Mucosa of descending colon (tissue), 3 donors: ENCODE measurements at regions of chr10 and their contacts with region 1.

Region 1: DNA sequence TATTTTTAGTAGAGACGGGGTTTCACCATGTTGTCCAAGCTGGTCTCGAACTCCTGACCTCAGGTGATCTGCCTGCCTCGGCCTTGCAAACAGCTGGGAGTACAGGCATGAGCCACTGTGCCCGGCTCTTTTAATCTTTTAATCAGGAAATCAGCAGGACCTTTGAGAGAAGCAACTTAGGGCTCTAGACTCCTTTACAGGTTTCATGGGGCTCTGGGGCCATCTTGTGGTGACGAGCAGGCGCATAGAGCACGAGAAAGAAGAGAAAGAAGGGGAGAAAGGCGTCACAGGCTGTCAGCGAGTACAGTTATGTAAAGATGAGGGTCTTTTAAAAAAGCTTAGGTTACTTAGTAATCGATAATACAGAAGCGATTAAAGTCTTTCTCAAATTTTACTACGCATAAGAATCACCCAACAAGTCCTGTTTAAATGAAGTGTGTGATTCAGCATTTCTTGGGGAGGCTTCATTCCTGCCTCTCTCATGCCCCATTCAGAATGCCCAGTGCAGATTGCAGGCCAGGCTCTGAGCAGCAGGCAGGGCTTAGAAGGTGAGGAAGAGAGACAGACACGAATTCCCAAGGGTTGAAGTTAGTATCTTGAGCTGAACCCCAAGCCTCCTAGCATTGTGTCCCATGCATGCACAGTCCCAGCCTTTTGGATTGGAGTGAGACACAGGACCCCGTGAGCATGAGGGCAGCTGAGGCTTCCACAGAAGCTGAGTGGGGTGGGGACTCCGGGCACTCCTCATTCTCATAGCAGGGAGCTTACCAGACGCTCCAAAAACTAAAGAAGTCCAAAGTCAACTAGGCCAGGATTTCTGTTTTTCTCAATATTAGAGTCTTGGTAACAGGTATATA is 23.6 kb upstream of the PFKP start:
- DNase-seq: peak in 2 of 3 donors; percentile 76 to 83
- ATAC-seq: peak; percentile 85
- H3K4me3 ChIP-seq: no peak overlapping the region
- H3K4me1 ChIP-seq: peaks cover 3% of the 10 kb centered on the region
- CTCF ChIP-seq: peak; percentile 17

Region 2: DNA sequence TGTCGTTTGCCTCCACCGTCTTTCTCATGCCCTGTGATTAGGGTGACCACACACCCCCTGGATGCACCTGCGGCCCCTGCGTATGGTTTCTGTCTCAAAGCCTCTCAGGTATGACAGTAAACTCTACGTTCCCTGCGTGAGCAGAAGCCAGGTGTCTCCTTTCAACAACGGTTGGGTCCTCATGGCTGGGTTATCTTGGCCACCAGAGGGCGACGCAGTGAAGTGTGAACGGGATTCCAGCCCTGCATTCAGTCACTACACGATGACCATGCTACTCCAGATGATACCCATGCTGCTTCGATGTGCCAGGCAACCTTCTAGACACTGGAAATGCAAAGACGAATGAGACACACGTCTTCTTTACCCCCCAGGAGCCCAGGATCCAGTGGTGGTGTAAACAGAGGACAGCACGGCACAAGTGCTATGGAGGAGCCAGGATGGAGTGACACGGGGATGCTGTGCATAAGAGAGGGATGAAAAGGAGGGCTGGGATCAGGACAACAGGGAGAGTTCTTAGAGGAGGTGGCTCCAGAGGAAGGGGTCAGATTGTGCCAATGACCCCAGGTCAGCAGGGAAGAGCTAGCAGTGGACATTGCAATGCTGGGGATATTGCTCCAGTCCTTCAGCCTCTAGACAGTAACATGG is 204.5 kb before region 1 on chr10:
- intact Hi-C with region 1: loop called in 1 of 2 experiments (anchors 10 kb)
- DNase-seq: peak in 2 of 3 donors; percentile 51 to 73
- ATAC-seq: peak; percentile 66
- H3K4me3 ChIP-seq: no peak overlapping the region
- H3K4me1 ChIP-seq: no peaks in the 10 kb centered on the region
- CTCF ChIP-seq: peak; percentile 34

Region 3: DNA sequence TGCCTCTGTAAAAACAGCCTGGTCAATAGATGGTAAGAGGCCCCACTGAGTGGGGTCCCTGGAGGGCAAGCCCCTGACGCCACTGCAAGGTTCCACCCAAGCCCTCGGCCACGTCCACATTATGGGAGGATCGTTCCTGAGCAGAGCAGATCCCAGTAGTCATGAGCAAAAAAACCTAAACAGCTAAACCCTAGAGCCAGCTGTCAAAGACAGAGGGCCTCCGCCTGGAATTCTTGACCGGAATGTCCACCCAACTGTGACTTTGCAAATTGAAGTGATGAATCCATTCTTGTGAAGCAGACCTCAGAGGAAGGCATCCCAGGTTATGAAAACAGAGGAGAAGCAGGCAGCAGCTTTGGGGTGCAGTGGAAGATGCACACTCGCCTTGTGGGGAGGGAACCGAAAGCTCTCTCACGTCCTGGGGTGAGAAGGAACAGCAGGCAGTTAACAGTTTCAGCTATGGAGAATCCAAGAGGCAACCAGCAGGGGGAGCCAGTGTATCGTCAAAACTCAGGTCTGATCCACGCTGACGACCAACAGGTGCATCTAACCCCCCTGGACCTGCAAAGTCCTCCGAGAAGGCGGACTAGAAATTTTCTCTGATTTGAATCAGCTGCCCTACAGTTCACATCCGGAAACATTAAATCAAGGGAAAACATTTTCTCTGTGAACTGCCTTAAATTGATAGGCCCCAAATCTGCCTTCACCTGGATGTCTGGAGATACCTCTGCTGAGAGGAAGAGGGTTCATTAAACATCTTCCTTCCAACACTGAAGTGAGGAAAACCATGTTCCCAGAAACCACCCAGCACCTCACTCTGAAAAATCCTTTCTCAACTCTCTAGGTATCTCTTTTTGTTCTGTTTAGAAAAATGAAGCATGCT is 115.5 kb before region 1 on chr10:
- intact Hi-C with region 1: loop called in 1 of 2 experiments (anchors 5 kb)
- DNase-seq: peak in 2 of 3 donors; percentile 69 to 88
- ATAC-seq: peak; percentile 82
- H3K4me3 ChIP-seq: no peak overlapping the region
- H3K4me1 ChIP-seq: no peaks in the 10 kb centered on the region
- CTCF ChIP-seq: peak; percentile 15